ENCODE measurements at regions of chr14 and their contacts with region 1.

Region 1: DNA sequence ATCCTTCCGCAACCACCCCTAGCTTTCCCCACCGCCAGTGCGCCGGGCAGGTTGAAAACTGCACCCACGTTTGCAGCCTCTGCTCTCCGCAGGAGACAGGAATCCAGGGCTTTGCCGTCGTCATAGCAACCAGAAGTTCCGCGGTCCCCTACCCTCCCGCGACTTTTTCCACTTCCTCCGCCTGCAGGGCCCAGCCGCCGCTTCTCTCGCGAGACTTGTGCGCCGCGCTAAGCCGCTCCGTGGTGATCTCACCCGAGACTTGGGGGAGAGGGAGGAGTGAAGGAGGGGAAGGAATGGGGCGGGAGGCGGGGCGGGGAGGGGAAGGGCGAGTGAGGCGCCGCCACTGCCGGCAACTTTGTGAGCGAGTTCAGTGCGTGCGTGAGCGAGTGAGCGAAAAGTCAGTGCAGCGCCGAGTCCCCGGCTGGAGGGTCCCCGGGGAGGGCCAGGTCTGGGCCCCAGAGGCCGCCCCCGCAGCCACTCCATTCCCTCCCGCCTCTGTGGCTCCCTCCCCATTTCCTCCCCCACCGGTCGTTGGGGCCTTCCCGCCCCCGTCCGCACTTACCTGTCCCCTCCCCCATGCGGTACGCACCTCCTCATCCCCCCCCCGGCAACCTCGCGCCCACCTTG is 413.0 kb downstream of the PCNX1 start:
- DNase-seq: peak; percentile 96 to 100 (median 98)
- ATAC-seq: peak; percentile 87
- H3K4me3 ChIP-seq: peak within 1 kb of the TSS; percentile 83 to 84
- H3K4me3 Mint-ChIP-seq: peak within 1 kb of the TSS; percentile 85
- H3K27ac ChIP-seq: peak within 1 kb of the TSS; percentile 79 to 91
- H3K27ac Mint-ChIP-seq: peak within 1 kb of the TSS; percentile 92
- H3K4me1 ChIP-seq: peaks cover 32% of the 10 kb centered on the region
- H3K4me1 Mint-ChIP-seq: peaks cover 39% of the 10 kb centered on the region
- H3K27me3 ChIP-seq: no peaks in the 10 kb centered on the region
- H3K27me3 Mint-ChIP-seq: no peaks in the 10 kb centered on the region
- CTCF ChIP-seq: no peak

Region 2: DNA sequence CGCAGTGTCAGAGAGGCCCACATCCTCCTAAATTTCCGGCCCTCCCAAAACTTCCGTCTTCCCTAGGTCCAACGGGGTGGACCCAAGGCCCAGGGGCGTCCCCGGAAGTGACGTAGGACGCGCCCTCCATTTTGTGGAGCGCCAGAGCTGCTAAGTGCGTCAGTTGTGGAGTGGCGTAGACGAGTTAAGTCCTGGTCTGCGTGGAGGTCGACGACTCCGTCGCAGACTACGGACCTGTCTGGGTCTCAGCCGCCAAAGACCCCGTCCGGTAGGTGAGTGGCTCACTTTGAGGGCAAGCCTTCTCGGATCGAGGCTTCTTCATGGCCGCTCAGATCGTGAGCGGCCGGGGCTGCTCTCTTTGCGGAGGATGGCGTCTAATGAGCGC is 1553.2 kb before region 1 on chr14 and contains the start of gene SRSF5:
- CTCF ChIA-PET with region 1: no interaction called
- POLR2A ChIA-PET with region 1: no interaction called
- intact Hi-C with region 1: loop called in 1 of 2 experiments (anchors 5 kb)
- DNase-seq: peak; percentile 86 to 97 (median 96)
- ATAC-seq: peak; percentile 80
- H3K4me3 ChIP-seq: peak within 1 kb of the TSS; percentile 78 to 88
- H3K4me3 Mint-ChIP-seq: peak within 1 kb of the TSS; percentile 99
- H3K27ac ChIP-seq: peak within 1 kb of the TSS; percentile 97 to 99
- H3K27ac Mint-ChIP-seq: peak within 1 kb of the TSS; percentile 100
- H3K4me1 ChIP-seq: peaks cover 50% of the 10 kb centered on the region
- H3K4me1 Mint-ChIP-seq: peaks cover 67% of the 10 kb centered on the region
- H3K27me3 ChIP-seq: no peaks in the 10 kb centered on the region
- H3K27me3 Mint-ChIP-seq: no peaks in the 10 kb centered on the region
- CTCF ChIP-seq: no peak
- total RNA-seq, gene SRSF5: 1,544 to 1,597 TPM

Region 3: DNA sequence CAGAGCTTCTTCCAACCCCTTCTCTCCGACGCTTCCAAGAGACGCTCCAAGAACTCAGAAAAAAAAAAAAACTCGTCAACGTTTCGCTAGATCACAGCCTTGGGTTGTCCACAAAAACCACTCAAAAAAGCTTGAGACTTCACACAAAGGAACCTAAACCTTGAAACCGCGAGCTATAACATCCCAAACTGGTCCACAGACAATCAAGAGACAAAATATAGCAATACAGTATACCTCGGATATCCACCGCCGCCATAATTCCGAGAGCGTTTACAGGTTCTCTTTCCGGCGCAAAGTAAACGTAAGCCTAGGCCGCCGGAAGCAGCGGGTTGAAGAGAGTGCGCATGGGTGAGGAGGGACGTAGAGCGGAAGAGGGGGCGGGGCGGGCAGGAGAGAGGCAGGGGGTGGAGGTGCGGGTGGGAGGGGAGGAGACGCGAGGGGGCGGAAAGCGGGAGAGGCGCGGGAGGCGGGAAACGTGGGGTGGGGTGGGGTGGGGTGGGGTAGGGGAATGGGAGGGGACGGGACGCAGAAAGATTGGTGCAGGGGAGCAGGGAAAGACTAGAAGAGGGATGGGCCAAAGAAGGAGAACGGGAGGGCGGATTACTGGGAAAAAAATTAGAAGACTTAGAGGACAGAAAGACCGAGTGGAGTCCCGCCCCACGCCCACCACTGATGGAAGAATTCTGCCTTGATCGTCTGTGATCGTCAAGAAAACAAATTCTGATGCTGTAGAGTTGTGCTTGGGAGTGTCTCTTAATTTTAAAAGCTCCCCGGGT is 719.6 kb before region 1 on chr14 and contains the start of gene MED6:
- CTCF ChIA-PET with region 1: no interaction called
- POLR2A ChIA-PET with region 1: no interaction called
- intact Hi-C with region 1: loop called in 1 of 2 experiments (anchors 5 kb)
- DNase-seq: peak; percentile 83 to 96 (median 94)
- ATAC-seq: peak; percentile 100
- H3K4me3 ChIP-seq: peak within 1 kb of the TSS; percentile 90 to 99
- H3K4me3 Mint-ChIP-seq: peak within 1 kb of the TSS; percentile 99
- H3K27ac ChIP-seq: peak within 1 kb of the TSS; percentile 92 to 96
- H3K27ac Mint-ChIP-seq: peak within 1 kb of the TSS; percentile 99
- H3K4me1 ChIP-seq: peaks cover 20% of the 10 kb centered on the region
- H3K4me1 Mint-ChIP-seq: peaks cover 30% of the 10 kb centered on the region
- H3K27me3 ChIP-seq: no peaks in the 10 kb centered on the region
- H3K27me3 Mint-ChIP-seq: no peaks in the 10 kb centered on the region
- CTCF ChIP-seq: no peak
- total RNA-seq, gene MED6: 116 to 119 TPM

Region 4: DNA sequence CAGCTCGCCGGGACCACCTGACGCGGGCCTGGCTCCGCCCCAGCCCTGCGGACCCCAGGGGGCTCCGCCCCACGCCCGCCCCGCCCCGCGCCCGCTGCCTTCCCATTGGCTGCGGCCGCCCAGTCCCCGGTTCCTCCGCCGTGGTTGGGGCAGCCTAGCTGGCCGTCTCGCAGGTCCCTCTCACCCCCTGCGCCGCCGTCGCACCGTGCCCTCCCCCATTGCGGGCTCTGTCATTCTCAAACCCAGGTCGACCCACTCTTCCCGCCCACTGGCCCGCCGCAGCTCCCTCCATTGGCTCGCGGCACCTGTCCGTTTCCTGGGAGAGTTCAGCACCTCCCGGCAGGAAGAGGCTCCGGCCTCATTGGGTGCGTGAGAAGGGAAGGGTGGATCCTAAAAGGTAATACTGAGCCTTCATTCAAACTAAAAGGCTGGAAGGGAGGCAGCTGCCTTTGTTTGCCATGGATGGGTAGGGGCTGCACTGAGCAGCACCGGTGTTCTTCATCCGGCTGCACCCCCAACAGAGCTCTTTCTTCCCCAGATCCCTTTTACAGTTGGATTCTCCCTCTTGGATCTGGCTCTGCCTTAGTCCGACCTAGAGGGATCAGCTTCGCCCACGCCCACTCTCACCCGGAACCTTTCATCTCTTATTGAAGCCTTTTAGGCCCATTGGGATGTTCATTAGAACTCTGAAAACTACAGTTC is 510.5 kb before region 1 on chr14:
- CTCF ChIA-PET with region 1: no interaction called
- POLR2A ChIA-PET with region 1: no interaction called
- intact Hi-C with region 1: loop called (anchors 5 kb)
- DNase-seq: peak; percentile 70 to 95 (median 87)
- ATAC-seq: peak; percentile 79
- H3K4me3 ChIP-seq: peak overlapping the region; percentile 58 to 65
- H3K4me3 Mint-ChIP-seq: no peak overlapping the region
- H3K27ac ChIP-seq: peak overlapping the region; percentile 30 to 56
- H3K27ac Mint-ChIP-seq: peak overlapping the region; percentile 80
- H3K4me1 ChIP-seq: peaks cover 12% of the 10 kb centered on the region
- H3K4me1 Mint-ChIP-seq: peaks cover 10% of the 10 kb centered on the region
- H3K27me3 ChIP-seq: no peaks in the 10 kb centered on the region
- H3K27me3 Mint-ChIP-seq: no peaks in the 10 kb centered on the region
- CTCF ChIP-seq: no peak

Region 5: DNA sequence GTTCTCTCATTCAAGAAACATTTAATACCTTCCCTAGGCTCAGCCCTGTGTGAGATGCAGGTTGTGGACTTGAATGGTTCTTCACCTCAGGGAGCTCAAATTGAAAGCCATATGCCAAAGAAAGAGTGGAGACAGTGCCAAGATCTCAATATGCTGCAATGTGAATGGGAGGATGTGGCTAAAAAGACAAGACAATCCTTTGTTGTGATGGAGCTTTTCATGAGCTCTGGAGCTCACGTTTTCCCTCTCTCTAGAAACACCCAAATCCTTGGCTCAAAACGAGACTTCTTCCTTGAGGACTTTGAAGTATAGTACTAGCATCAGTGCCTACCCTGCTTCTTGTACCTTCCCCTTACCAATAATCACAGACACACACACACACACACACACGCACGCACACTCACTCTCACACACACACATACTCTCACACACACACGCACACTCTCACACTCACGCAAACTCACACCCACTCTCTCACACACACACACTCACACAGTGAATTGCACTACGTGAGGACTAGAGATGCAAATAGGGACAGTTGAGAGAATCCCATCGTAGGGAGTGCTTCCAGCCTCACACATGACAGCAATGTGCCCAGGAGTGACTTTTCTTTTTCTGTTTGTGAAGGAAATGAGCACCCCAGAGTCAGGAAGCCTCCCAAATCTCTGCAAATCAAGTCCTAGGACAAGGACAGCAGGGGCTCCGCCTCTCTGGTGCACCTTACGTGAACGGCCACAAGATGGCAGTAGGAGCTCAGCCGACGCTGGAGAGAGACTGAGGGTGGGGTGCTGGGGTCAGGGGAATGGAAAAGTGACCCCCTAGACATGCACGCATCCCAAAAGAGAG is 181.5 kb before region 1 on chr14:
- CTCF ChIA-PET with region 1: interaction called, 8 read pairs
- POLR2A ChIA-PET with region 1: interaction called, 5 read pairs
- intact Hi-C with region 1: loop called (anchors 1 to 2 kb)
- DNase-seq: peak; percentile 36 to 75 (median 64)
- ATAC-seq: peak; percentile 23
- H3K4me3 ChIP-seq: no peak overlapping the region
- H3K4me3 Mint-ChIP-seq: no peak overlapping the region
- H3K27ac ChIP-seq: no peak overlapping the region
- H3K27ac Mint-ChIP-seq: no peak overlapping the region
- H3K4me1 ChIP-seq: peaks cover 18% of the 10 kb centered on the region
- H3K4me1 Mint-ChIP-seq: peaks cover 25% of the 10 kb centered on the region
- H3K27me3 ChIP-seq: no peaks in the 10 kb centered on the region
- H3K27me3 Mint-ChIP-seq: no peaks in the 10 kb centered on the region
- CTCF ChIP-seq: peak; percentile 93

Region 6: GRCh38 chr14:71346685-71347084 is 26.5 kb after region 1 on chr14:
- CTCF ChIA-PET with region 1: no interaction called
- POLR2A ChIA-PET with region 1: no interaction called
- intact Hi-C with region 1: no loop called
- DNase-seq: peak in 2 of 9 experiments; percentile 33 to 47
- ATAC-seq: peak; percentile 38
- H3K4me3 ChIP-seq: no peak overlapping the region
- H3K4me3 Mint-ChIP-seq: no peak overlapping the region
- H3K27ac ChIP-seq: no peak overlapping the region
- H3K27ac Mint-ChIP-seq: no peak overlapping the region
- H3K4me1 ChIP-seq: no peaks in the 10 kb centered on the region
- H3K4me1 Mint-ChIP-seq: peaks cover 58% of the 10 kb centered on the region
- H3K27me3 ChIP-seq: no peaks in the 10 kb centered on the region
- H3K27me3 Mint-ChIP-seq: no peaks in the 10 kb centered on the region
- CTCF ChIP-seq: no peak

Region 7: GRCh38 chr14:71555654-71556559 is 235.7 kb after region 1 on chr14:
- CTCF ChIA-PET with region 1: no interaction called
- POLR2A ChIA-PET with region 1: interaction called, 3 read pairs
- intact Hi-C with region 1: loop called (anchors 1 to 2 kb)
- DNase-seq: peak in 8 of 9 experiments; percentile 15 to 93 (median 52)
- ATAC-seq: peak; percentile 88
- H3K4me3 ChIP-seq: peak overlapping the region in 1 of 2 experiments; percentile 22
- H3K4me3 Mint-ChIP-seq: peak overlapping the region; percentile 81
- H3K27ac ChIP-seq: peak overlapping the region; percentile 54 to 86
- H3K27ac Mint-ChIP-seq: peak overlapping the region; percentile 96
- H3K4me1 ChIP-seq: peaks cover 44% of the 10 kb centered on the region
- H3K4me1 Mint-ChIP-seq: peaks cover 65% of the 10 kb centered on the region
- H3K27me3 ChIP-seq: no peaks in the 10 kb centered on the region
- H3K27me3 Mint-ChIP-seq: no peaks in the 10 kb centered on the region
- CTCF ChIP-seq: no peak

Region 8: DNA sequence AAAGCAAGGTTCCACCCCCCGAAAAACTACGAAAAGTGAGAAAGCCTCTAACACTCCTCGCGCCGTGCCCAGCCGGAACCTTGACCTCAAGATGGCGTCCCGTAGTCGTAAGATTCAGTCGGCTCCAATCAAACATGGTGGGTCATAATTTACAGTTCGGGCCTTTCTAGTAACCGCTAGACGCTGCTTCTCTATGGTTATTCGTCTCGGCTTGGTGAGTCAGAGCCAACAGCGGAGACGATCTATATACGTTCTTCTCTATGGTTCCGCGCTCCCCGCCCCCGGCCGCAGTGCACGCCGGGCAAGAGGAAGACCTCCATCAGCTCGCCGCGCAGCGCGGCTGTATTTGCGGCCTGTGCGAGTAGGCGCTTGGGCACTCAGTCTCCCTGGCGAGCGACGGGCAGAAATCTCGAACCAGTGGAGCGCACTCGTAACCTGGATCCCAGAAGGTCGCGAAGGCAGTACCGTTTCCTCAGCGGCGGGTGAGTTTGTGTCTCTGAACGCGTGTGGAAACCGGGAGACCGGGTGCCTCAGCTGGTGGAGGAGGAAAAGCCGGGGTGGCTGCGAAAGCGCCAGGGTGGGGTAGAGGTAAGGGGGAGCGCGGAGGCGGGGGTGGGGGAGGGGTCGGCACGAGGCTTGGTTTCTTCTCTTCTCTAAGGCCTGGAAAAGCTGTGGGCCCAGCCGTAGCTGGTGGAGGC is 1738.2 kb after region 1 on chr14 and contains the start of gene RBM25:
- CTCF ChIA-PET with region 1: no interaction called
- POLR2A ChIA-PET with region 1: interaction called, 3 read pairs
- intact Hi-C with region 1: loop called in 1 of 2 experiments (anchors 5 kb)
- DNase-seq: peak; percentile 89 to 98 (median 94)
- ATAC-seq: peak; percentile 95
- H3K4me3 ChIP-seq: peak within 1 kb of the TSS; percentile 78 to 99
- H3K4me3 Mint-ChIP-seq: no peak within 1 kb of the TSS
- H3K27ac ChIP-seq: peak within 1 kb of the TSS; percentile 81 to 94
- H3K27ac Mint-ChIP-seq: no peak within 1 kb of the TSS
- H3K4me1 ChIP-seq: peaks cover 44% of the 10 kb centered on the region
- H3K4me1 Mint-ChIP-seq: peaks cover 40% of the 10 kb centered on the region
- H3K27me3 ChIP-seq: no peaks in the 10 kb centered on the region
- H3K27me3 Mint-ChIP-seq: no peaks in the 10 kb centered on the region
- CTCF ChIP-seq: no peak
- total RNA-seq, gene RBM25: 166 to 178 TPM